ENCODE measurements at regions of chr11 and their contacts with region 1.

Region 1: GRCh38 chr11:130964058-130964792 is 47.9 kb upstream of the SNX19 start:
- DNase-seq: no peak
- H3K27ac ChIP-seq: no peak overlapping the region
- CTCF ChIP-seq: no peak

Region 2: DNA sequence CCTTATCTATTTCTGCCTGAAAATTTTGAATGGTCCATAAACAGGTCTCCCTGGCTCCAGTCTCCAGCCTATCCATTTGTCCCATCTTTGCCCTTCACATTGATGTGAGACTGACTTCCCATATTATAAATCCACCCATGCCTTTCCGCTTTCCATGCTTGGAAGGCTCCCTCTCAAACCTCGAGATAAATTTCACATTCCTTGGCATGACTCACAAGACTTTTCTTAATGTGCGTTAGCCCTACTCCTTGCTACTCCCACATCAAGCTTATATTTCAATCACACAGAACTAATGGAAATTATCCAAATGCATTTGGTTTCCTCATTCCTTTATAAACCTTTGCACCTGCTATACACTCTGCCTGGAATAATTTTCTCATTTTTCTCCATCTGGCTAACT is 242.4 kb after region 1 on chr11:
- CTCF ChIA-PET with region 1: no interaction called
- POLR2A ChIA-PET with region 1: no interaction called
- DNase-seq: no peak
- H3K27ac ChIP-seq: no peak overlapping the region
- CTCF ChIP-seq: no peak

Region 3: DNA sequence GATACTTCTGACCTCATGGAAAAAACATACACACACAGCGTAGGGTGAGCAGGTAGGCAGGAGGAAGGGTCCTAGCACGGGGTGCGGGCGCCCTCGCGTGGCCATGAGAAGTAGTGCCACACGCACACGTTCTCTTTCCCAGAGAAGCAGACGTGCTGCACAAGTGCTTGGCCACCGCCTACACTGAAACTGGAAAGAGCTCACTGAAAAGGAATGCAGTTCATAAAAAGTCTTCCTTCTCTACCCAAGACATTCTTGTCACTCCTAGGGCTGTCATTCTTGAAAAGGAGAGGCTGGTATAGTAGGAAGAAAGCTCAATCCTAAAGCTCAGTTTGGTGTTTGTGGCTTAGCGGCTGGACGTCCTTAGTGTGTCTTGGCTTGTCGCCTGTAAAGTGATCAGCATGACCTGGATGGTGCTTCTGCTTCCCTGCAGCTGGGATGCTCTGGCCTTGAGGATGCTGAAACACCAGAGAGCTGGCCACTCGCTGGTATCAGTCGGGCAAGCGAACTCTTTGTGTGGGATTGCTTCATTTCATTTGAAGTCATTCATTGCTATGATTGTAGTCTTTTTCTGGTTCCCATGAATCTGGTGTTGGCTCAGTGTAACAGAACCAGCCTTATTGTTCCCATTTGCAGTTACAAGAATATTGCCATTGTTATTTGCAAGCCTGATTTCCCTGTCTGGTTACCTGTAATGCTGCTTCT is 710.0 kb after region 1 on chr11:
- CTCF ChIA-PET with region 1: interaction called, 10 read pairs
- POLR2A ChIA-PET with region 1: no interaction called
- DNase-seq: peak; percentile 53
- H3K27ac ChIP-seq: no peak overlapping the region
- CTCF ChIP-seq: peak; percentile 93

Measured in RWPE1 (cell line).